ENCODE measurements at regions of chr19 and their contacts with region 1.

Region 1: DNA sequence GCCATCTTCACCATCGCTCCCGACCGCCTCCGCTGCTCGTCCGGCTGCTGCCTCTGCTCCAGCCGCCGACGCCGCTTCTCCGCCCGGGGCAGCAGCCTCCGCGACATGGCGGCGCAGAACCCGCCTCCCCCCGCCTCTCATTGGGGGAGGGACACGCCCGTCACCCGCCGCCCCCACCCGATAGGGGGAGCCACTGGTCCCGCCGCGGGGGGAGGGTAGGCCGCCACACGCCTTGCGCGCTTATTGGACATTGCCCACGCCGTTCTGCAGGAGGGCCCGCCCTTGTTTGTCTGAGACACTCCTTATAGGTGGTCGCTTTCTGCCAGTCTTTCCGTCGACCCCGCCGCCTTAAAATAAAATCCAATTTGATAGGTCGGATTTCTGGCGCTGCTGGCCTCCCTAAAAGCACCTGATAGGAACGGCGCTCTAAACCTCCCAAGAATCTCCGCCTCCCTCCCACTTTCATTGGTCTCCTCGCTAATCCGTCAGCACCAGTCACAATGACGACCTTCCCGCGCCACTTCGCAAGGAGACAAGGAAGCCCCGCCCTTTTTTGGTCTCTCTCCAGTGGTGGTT is at the start of gene HNRNPL:
- DNase-seq: peak; percentile 99
- ATAC-seq: peak; percentile 61
- H3K4me3 Mint-ChIP-seq: peak within 1 kb of the TSS; percentile 93
- H3K27ac Mint-ChIP-seq: peak within 1 kb of the TSS; percentile 98
- H3K4me1 Mint-ChIP-seq: peaks cover 61% of the 10 kb centered on the region
- H3K27me3 Mint-ChIP-seq: no peaks in the 10 kb centered on the region
- CTCF ChIP-seq: no peak
- total RNA-seq, gene HNRNPL: 528 and 546 TPM in 2 replicates

Region 2: DNA sequence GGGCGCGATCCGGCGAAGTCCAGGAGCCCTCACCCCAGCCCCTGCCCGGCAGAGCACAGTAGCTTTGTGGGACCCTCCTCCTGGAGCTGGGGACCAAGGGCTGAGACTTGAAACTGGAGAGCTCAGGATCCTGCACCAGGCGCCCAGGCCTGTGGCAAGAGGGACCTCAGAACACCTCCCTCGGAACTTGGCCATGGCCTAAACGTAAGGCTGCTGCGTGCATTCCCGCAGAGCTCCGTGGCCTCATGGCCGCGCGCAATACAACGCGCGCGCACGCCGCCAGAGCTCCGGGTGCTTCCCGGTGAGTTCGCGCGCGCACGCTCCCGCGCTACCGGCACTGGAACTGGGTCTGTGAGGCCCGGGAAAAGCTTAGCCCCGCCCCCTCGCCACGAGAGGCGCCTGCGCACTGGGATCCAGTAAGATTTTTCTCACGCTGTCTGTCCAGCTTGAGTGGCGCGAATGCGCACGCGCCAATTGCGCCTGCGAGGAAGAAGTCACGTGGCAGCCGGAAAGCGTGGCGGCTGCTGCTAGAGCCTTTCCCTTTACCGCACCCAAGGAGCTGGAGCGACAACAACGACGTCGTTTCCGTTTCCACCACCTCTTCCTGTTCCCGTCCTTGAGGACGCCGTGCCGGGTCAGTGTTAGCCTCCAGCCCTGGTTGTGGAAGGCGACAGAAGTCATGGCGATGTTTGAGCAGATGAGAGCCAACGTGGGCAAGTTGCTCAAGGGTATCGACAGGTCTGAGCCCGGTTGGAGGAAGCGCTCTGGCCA is 231.2 kb before region 1 on chr19 and contains the start of gene EIF3K:
- CTCF ChIA-PET with region 1: no interaction called
- POLR2A ChIA-PET with region 1: interaction called, 12 read pairs
- intact Hi-C with region 1: no loop called
- DNase-seq: peak; percentile 97
- ATAC-seq: peak; percentile 28
- H3K4me3 Mint-ChIP-seq: peak within 1 kb of the TSS; percentile 100
- H3K27ac Mint-ChIP-seq: peak within 1 kb of the TSS; percentile 97
- H3K4me1 Mint-ChIP-seq: peaks cover 53% of the 10 kb centered on the region
- H3K27me3 Mint-ChIP-seq: no peaks in the 10 kb centered on the region
- CTCF ChIP-seq: no peak
- total RNA-seq, gene EIF3K: 344 and 385 TPM in 2 replicates

Region 3: GRCh38 chr19:38742906-38743305 is 107.0 kb before region 1 on chr19:
- CTCF ChIA-PET with region 1: no interaction called
- POLR2A ChIA-PET with region 1: interaction called, 13 read pairs
- intact Hi-C with region 1: no loop called
- DNase-seq: no peak
- ATAC-seq: no peak
- H3K4me3 Mint-ChIP-seq: no peak overlapping the region
- H3K27ac Mint-ChIP-seq: no peak overlapping the region
- H3K4me1 Mint-ChIP-seq: peaks cover 2% of the 10 kb centered on the region
- H3K27me3 Mint-ChIP-seq: no peaks in the 10 kb centered on the region
- CTCF ChIP-seq: no peak

Region 4: DNA sequence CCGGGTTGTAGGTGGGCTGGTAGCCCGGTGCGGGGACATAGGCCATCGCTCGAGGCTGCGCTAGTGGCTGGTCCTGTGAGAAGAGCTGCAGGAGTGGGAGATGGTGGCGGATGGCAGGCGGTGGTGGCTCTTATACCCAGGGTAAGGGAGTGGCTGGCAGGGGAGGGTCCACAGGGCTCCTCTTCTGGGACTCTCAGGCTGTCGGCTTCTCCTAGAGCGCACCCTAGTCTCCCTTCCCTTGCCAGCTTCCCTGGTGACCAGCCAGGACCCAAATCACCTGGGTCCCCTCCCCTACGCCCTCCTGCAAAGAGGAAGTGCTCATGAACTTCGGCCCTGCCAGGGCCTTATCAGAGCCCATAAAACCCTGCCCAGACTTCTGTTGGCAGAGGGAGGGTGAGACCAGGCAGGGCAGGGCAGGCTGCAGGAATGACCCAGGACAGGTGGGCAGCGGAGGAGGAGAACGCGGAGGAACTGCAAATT is 37.1 kb before region 1 on chr19 and contains the start of gene LGALS4:
- CTCF ChIA-PET with region 1: no interaction called
- POLR2A ChIA-PET with region 1: no interaction called
- intact Hi-C with region 1: no loop called
- DNase-seq: no peak
- ATAC-seq: no peak
- H3K4me3 Mint-ChIP-seq: no peak within 1 kb of the TSS
- H3K27ac Mint-ChIP-seq: peak within 1 kb of the TSS; percentile 2
- H3K4me1 Mint-ChIP-seq: no peaks in the 10 kb centered on the region
- H3K27me3 Mint-ChIP-seq: no peaks in the 10 kb centered on the region
- CTCF ChIP-seq: no peak
- total RNA-seq, gene LGALS4: 2.7 and 4.5 TPM in 2 replicates

Region 5: DNA sequence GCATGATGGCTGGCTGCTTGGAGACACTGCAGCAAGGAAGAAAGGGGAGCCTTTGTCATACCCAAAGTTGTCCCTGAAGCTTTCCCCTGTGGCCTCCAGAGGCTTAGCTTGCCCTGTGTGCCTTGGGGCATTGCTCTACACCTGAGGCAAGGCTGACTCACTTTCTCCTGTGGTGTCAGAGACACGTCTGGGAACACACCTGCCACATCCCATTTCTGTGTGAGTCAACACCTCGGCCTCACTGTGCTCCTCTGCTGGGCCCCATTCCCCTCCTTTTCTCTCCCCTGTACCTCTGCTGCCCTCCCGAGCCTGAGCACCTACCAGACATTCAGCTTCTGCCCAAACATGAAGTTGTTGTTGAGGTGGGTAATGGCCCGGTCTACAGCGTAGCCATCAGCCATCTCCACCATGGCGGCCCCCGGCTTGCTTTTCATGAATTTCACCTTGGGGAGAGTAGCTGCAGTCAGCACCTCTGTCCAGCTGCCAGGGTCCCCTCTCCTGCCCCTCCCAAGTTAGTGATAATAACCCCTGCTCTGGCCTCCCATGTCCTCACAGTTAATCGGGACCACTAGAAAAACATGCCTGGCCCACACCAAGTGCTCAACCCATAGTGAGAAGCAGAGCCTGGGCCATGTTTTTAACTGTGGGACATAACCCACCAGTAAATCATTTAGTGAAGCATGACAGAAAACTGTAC is 11.2 kb before region 1 on chr19:
- CTCF ChIA-PET with region 1: no interaction called
- POLR2A ChIA-PET with region 1: interaction called, 118 read pairs
- intact Hi-C with region 1: loop called (anchors 1 kb)
- DNase-seq: no peak
- ATAC-seq: no peak
- H3K4me3 Mint-ChIP-seq: no peak overlapping the region
- H3K27ac Mint-ChIP-seq: peak overlapping the region; percentile 50
- H3K4me1 Mint-ChIP-seq: peaks cover 26% of the 10 kb centered on the region
- H3K27me3 Mint-ChIP-seq: no peaks in the 10 kb centered on the region
- CTCF ChIP-seq: no peak

Region 6: GRCh38 chr19:38877781-38878574 is 28.0 kb after region 1 on chr19 and contains the start of gene RINL:
- CTCF ChIA-PET with region 1: interaction called, 3 read pairs
- POLR2A ChIA-PET with region 1: interaction called, 125 read pairs
- intact Hi-C with region 1: no loop called
- DNase-seq: peak; percentile 57
- ATAC-seq: peak; percentile 94
- H3K4me3 Mint-ChIP-seq: peak within 1 kb of the TSS; percentile 92
- H3K27ac Mint-ChIP-seq: peak within 1 kb of the TSS; percentile 98
- H3K4me1 Mint-ChIP-seq: peaks cover 48% of the 10 kb centered on the region
- H3K27me3 Mint-ChIP-seq: no peaks in the 10 kb centered on the region
- CTCF ChIP-seq: no peak
- total RNA-seq, gene RINL: 53.5 and 65.0 TPM in 2 replicates

Region 7: DNA sequence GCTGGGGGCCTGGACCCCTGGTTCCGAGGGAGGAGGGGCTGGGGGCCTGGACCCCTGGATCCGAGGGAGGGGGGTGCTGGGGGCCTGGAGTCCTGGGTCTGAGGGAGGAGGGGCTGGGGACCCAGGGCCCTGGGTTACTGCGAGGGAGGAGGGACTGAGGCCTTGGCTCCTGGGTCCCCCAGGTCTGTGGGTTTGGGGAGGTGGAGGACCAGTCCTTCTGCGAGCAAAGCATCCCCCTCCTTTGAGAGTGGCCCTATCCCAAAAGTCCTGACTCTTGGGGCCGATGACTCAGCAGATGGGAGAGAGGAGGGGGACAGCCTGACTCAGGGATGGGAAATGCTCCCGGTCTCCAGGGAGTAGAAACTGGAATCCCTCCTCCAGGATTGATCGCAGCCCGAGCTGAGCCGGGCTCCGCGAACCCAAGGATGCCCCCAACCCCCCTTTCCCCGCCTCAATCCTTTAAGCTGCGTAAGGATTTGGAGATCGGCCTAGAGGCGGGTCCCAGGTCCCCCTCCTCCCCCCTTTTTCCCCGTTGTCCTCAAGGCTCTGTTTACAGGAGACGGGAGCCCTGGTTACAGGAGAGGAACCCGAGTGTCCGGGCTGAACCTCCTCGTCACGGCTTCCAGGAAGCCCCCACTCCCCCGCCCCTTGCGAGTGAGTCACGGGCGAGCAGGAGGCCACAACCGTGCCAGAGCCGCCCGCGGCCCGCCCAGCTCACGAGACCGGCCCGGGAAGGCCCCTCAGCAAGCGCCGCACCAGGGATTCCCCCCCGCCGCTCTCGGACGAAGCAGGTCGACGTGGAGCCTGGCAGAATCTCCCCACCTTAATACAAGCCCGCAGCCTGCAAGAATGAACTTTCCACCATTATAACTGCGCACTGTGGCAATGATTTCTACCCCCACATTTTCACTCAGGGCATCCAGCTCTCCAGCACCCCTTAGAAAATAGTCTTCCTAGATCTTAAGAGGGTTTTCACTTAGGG is 553.7 kb after region 1 on chr19:
- CTCF ChIA-PET with region 1: no interaction called
- POLR2A ChIA-PET with region 1: no interaction called
- intact Hi-C with region 1: loop called (anchors 5 kb)
- DNase-seq: peak; percentile 93
- ATAC-seq: peak; percentile 38
- H3K4me3 Mint-ChIP-seq: peak overlapping the region; percentile 89
- H3K27ac Mint-ChIP-seq: peak overlapping the region; percentile 91
- H3K4me1 Mint-ChIP-seq: peaks cover 74% of the 10 kb centered on the region
- H3K27me3 Mint-ChIP-seq: no peaks in the 10 kb centered on the region
- CTCF ChIP-seq: no peak